Activated CD4-positive, alpha-beta T cell treated with anti-CD3 and anti-CD28 coated beads for 36 hours (primary cell): ENCODE measurements at regions of chr3 and their contacts with region 1.

Region 1: GRCh38 chr3:52705688-52706686 is at the starts of genes GLT8D1 and SPCS1:
- DNase-seq: peak; percentile 92
- ATAC-seq: peak; percentile 94
- H3K4me3 Mint-ChIP-seq: peak within 1 kb of the TSS; percentile 89
- H3K27ac Mint-ChIP-seq: peak within 1 kb of the TSS; percentile 90
- H3K4me1 Mint-ChIP-seq: peaks cover 28% of the 10 kb centered on the region
- H3K27me3 Mint-ChIP-seq: no peaks in the 10 kb centered on the region
- total RNA-seq, gene GLT8D1: 35.2 to 38.0 TPM
- total RNA-seq, gene SPCS1: 111 to 120 TPM

Region 2: DNA sequence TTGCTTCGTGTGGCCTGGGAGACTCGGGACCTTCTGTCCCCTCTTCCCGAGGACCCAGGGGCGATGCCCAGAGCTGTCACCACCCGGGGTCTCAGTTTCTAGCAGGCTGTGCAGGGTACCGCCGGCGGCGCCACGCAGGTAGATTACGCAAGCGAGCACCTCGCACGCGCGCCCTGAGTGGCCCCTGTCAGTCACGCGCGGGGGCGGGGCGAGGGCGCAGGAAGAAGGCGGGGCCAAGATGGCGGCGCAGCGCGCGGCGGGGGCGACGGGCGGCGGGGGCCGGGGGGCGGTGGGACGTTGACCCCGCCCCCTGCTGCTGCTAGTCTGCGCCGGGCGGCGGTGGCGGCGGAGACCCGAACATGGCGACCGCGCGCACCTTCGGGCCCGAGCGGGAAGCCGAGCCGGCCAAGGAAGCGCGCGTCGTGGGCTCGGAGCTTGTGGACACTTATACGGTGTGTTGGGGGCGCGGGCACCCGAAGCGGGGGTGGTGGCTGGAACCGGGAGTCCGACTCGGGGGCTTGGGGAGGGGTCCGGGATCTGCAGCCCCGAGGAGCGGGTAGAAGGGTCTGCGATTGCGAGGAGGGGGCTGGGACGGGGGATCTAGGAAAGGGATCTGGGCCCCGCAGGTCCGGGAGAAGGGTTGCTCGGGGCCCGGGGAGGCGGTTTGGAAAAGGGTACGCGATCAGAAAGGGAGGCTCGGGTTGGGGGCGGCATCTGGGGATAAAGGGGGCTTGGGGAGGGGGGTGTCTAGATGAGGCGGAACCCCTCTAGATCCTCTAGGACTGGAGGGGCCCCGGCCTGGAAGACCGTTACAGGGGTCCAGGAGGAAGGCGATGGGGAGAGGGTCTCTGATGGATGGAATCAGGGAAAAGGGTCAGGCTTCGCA is 250.5 kb before region 1 on chr3 and contains the start of gene NISCH:
- CTCF ChIA-PET with region 1: no interaction called
- POLR2A ChIA-PET with region 1: no interaction called
- intact Hi-C with region 1: loop called in 1 of 2 experiments (anchors 1 kb)
- DNase-seq: peak; percentile 98
- ATAC-seq: peak; percentile 88
- H3K4me3 Mint-ChIP-seq: peak within 1 kb of the TSS; percentile 96
- H3K27ac Mint-ChIP-seq: peak within 1 kb of the TSS; percentile 95
- H3K4me1 Mint-ChIP-seq: peaks cover 36% of the 10 kb centered on the region
- H3K27me3 Mint-ChIP-seq: no peaks in the 10 kb centered on the region
- total RNA-seq, gene NISCH: 61.4 to 68.9 TPM

Region 3: DNA sequence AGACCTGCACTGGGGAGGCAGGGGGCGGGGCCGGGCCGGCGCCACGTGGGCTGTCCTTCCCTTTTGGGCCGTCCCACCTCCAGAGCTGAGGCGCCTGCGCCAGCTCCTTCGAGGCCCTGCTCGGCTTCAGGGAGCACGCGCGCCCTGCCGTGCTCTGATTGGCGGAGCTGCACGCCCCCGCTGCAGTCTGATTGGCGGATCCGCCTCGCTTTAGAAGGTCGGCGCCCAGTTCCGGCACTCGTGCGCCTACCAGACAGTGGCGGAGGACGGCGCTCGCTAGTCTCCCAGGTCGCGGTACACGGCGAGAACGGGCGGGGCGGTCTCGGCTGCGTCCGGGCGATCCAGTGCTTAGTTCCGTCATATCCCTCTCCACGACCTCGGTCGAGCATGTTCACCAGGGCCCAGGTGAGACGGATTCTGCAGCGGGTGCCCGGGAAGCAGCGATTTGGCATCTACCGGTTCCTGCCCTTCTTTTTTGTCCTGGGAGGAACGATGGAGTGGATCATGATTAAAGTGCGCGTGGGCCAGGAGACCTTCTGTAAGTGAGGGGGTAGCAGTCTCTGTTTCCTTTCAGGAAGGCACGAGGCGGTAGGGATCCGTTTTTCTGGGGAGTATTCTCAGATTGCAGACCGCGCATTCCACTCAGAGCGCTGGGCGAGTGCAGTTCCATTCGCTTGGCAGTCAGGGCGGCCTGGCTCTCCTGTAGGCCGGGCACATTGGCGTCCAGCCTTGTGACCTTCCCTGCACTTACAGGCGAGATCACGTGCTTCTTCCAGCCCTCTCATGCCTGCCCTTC is 169.4 kb before region 1 on chr3 and contains the start of gene UQCC5:
- CTCF ChIA-PET with region 1: no interaction called
- POLR2A ChIA-PET with region 1: no interaction called
- intact Hi-C with region 1: loop called in 1 of 2 experiments (anchors 1 kb)
- DNase-seq: peak; percentile 99
- ATAC-seq: peak; percentile 91
- H3K4me3 Mint-ChIP-seq: peak within 1 kb of the TSS; percentile 100
- H3K27ac Mint-ChIP-seq: peak within 1 kb of the TSS; percentile 99
- H3K4me1 Mint-ChIP-seq: peaks cover 49% of the 10 kb centered on the region
- H3K27me3 Mint-ChIP-seq: no peaks in the 10 kb centered on the region
- total RNA-seq, gene UQCC5: 12.0 to 12.7 TPM

Region 4: DNA sequence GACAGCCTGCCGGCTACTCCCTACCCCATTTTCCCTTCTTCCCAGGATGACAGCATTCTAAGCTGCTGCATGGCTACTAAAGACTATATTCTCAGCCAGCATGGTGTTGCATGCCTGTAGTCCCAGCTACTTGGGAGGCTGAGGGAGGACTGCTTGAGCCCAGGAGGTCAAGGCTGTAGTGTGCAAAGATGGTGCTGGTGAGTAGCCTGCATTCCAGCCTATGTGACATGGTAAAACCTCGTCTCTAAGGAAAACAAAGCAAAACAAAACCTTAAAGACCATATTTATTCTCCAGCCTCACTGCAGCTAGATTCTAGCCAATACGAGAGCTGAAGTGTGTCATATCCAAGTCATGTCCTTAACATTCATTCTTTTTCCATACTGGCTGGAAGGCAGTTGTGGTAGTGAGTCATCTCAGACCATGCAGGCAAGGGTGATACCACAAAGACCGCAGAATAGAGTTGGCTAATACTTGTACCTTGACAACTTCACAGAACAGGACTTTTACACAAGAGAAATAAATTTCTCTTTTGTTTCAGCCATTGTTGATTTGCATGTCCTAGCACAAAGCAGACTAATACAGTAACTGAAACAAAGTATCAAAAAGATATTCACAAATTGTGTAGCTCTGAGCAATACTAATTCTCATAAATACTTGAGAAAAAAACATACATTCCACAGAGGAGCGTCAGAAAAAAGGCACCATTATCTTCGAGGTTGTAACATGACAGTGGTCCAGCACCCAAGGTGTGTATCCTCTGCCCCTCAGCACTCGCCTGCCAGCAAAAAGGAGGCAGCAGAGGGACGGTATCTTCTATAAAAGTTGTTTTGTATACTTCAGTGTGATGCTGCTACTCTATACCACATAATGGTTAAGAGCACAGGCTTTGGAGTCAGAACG is 35.1 kb before region 1 on chr3:
- CTCF ChIA-PET with region 1: no interaction called
- POLR2A ChIA-PET with region 1: interaction called, 3 read pairs
- intact Hi-C with region 1: loop called in 1 of 2 experiments (anchors 1 kb)
- DNase-seq: peak; percentile 69
- ATAC-seq: peak; percentile 85
- H3K4me3 Mint-ChIP-seq: peak overlapping the region; percentile 23
- H3K27ac Mint-ChIP-seq: peak overlapping the region; percentile 89
- H3K4me1 Mint-ChIP-seq: peaks cover 32% of the 10 kb centered on the region
- H3K27me3 Mint-ChIP-seq: no peaks in the 10 kb centered on the region

Region 5: DNA sequence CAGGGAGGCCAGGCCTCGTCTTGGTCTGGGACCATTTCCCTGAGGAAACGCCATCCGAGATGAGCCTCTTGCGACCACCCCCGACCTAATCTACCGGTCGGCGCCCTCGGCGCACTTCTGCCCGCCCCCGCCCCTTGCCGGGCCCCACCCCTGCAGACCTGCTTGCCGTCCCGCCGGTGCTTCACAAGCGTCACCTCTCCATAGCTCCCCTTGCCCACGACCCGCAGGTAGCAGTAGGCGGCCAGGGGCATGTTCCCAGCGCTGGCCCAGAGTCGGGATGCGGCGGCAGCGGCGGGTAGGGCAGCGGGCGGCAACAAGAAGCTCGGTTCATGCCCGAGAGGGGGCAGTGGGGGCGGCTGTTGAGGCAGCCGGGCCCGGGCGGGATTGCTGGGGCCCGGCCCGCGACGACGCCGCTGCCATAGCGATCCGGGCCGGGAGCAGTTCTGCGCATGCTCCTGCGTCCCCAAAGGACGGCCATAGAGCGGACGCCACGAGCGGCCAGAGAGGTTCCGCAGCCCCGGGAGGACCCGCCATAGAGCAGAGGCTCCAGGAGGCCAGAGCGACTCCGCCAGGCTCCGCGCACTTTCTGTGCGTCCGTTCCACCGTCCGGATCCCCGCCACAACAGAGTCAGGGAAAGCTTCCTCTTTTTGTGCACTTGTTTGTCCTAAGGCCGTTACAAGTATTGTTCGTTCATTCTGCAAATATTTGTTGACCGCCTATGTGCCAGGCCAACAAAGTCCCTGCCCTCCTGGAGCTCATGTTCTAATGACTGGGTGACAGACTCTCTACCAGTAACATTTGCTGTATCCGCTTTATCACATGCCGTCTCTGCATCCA is 64.7 kb after region 1 on chr3 and contains the start of gene NEK4:
- CTCF ChIA-PET with region 1: no interaction called
- POLR2A ChIA-PET with region 1: no interaction called
- intact Hi-C with region 1: loop called (anchors 1 to 2 kb)
- DNase-seq: peak; percentile 93
- ATAC-seq: peak; percentile 98
- H3K4me3 Mint-ChIP-seq: peak within 1 kb of the TSS; percentile 81
- H3K27ac Mint-ChIP-seq: peak within 1 kb of the TSS; percentile 94
- H3K4me1 Mint-ChIP-seq: peaks cover 15% of the 10 kb centered on the region
- H3K27me3 Mint-ChIP-seq: no peaks in the 10 kb centered on the region
- total RNA-seq, gene NEK4: 19.1 to 21.4 TPM